Activated CD4-positive, alpha-beta memory T cell treated with anti-CD3 and anti-CD28 coated beads for 36 hours (primary cell): ENCODE measurements at regions of chr1 and their contacts with region 1.

Region 1: GRCh38 chr1:169367486-169368405 is at the starts of genes BLZF1 and NME7:
- DNase-seq: peak; percentile 99
- H3K4me3 Mint-ChIP-seq: peak within 1 kb of the TSS; percentile 43
- H3K27ac Mint-ChIP-seq: no peak within 1 kb of the TSS
- H3K4me1 Mint-ChIP-seq: peaks cover 30% of the 10 kb centered on the region
- H3K27me3 Mint-ChIP-seq: no peaks in the 10 kb centered on the region
- total RNA-seq, gene BLZF1: 10.1 to 10.2 TPM
- total RNA-seq, gene NME7: 12.9 to 15.9 TPM

Region 2: GRCh38 chr1:167819849-167820683 is 1547.7 kb before region 1 on chr1:
- CTCF ChIA-PET with region 1: no interaction called
- POLR2A ChIA-PET with region 1: no interaction called
- intact Hi-C with region 1: no loop called
- DNase-seq: peak; percentile 40
- H3K4me3 Mint-ChIP-seq: peak overlapping the region; percentile 72
- H3K27ac Mint-ChIP-seq: no peak overlapping the region
- H3K4me1 Mint-ChIP-seq: peaks cover 5% of the 10 kb centered on the region
- H3K27me3 Mint-ChIP-seq: peaks cover 11% of the 10 kb centered on the region

Region 3: GRCh38 chr1:168421399-168422004 is 946.2 kb before region 1 on chr1:
- CTCF ChIA-PET with region 1: no interaction called
- POLR2A ChIA-PET with region 1: no interaction called
- intact Hi-C with region 1: loop called (anchors 5 kb)
- DNase-seq: peak; percentile 29
- H3K4me3 Mint-ChIP-seq: peak overlapping the region; percentile 49
- H3K27ac Mint-ChIP-seq: peak overlapping the region; percentile 78
- H3K4me1 Mint-ChIP-seq: peaks cover 33% of the 10 kb centered on the region
- H3K27me3 Mint-ChIP-seq: no peaks in the 10 kb centered on the region

Region 4: DNA sequence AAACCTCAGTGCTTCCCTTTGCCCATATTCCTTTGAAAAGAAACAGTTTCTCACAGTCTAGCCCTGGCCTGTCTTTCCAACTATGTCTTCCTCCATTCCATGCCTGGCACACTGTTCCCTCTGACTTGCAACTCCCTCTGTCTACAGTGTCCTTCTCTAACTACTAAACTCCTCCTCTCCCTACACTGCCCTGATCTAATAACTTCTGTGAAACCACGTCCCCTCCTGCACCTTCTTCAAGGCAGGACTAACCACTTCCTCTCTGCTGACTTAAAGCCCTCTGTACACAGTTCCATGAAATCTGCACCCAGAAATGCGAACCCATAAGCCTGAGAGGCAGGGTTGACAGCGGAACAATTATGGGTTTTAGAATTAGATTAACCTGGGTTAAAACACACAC is 323.4 kb before region 1 on chr1:
- CTCF ChIA-PET with region 1: no interaction called
- POLR2A ChIA-PET with region 1: no interaction called
- intact Hi-C with region 1: loop called (anchors 5 kb)
- DNase-seq: peak; percentile 57
- H3K4me3 Mint-ChIP-seq: no peak overlapping the region
- H3K27ac Mint-ChIP-seq: peak overlapping the region; percentile 35
- H3K4me1 Mint-ChIP-seq: peaks cover 53% of the 10 kb centered on the region
- H3K27me3 Mint-ChIP-seq: no peaks in the 10 kb centered on the region

Region 5: DNA sequence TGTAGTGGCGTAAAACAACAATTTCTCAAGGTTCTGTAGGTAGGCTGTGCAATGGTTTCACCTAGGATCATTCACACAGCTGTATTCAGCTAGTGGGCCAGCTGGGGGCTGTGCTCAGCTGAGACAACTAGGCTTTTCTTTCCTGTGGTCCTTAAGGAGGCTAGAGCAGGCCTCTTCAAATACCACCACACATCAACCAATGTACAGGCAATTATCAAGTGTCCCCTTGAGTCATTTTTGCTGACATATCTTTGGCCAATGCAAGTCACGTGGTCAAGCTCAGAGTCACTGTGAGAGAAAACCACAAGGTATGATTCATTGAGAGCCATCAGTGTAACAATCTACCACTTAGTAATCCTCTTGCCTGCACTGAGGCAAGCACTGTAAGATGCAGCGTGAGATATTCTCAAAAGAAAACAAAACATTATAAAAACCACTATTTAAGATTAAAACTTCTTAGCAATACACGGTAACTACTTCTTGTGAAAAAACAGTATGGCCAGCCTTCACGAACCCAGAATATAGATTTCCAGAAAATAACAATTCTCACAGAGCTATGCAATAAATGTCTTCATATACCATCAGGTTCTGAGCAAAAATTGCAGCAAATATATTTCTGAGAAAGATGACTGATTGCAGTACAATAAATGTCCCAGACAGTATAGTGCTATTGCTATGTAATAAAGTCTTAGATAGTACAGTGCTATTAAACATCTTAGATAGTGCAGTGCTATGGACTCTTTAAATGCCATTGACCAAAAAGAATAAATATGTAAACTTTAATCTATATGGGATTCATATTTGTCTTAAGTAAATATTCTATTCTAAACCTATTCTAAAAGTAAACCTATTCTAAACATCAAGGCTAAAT is 55.4 kb before region 1 on chr1:
- CTCF ChIA-PET with region 1: no interaction called
- POLR2A ChIA-PET with region 1: no interaction called
- intact Hi-C with region 1: loop called (anchors 1 kb)
- DNase-seq: peak; percentile 58
- H3K4me3 Mint-ChIP-seq: no peak overlapping the region
- H3K27ac Mint-ChIP-seq: no peak overlapping the region
- H3K4me1 Mint-ChIP-seq: peaks cover 16% of the 10 kb centered on the region
- H3K27me3 Mint-ChIP-seq: no peaks in the 10 kb centered on the region

Region 6: DNA sequence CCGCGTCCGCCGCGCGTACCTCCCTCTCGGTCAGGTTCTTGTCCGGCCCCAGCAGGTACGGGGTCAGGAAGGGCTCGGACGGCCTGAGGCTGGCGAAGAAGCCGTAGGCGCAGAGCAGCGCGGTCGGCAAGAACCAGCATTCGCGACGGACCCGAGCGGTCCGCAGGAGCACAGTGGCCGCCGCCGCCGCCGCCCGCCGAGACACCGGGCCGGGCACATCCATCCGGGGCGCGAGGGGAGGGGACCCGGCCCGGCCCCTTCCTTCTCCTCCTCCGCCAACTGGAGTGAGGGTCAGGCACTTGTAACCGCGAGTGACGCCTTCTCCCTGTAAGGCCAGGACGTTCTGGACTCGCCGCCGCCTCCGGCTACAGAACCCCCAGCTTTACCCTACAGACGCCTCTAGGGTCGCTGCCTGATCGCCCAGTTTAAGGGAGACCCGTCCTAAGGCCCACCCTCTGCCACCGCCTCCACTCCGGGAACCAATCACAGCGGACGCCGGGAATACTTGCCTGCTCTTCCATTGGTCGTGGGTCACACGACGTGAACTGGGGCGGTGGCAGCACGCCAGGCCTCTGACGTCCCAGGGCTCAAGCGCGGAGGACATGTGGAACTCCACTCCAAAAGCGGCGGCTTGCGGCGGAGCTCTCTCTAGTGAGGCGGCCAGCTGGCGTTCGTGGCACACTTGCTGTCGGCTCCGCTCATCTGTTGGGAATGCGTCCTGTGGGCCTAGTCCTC is 118.0 kb after region 1 on chr1 and contains the start of gene SLC19A2:
- CTCF ChIA-PET with region 1: no interaction called
- POLR2A ChIA-PET with region 1: interaction called, 5 read pairs
- intact Hi-C with region 1: loop called (anchors 1 kb)
- DNase-seq: peak; percentile 96
- H3K4me3 Mint-ChIP-seq: peak within 1 kb of the TSS; percentile 79
- H3K27ac Mint-ChIP-seq: peak within 1 kb of the TSS; percentile 83
- H3K4me1 Mint-ChIP-seq: peaks cover 53% of the 10 kb centered on the region
- H3K27me3 Mint-ChIP-seq: no peaks in the 10 kb centered on the region
- total RNA-seq, gene SLC19A2: 8.6 to 9.4 TPM

Region 7: GRCh38 chr1:169572187-169572586 is 204.4 kb after region 1 on chr1:
- CTCF ChIA-PET with region 1: no interaction called
- POLR2A ChIA-PET with region 1: no interaction called
- intact Hi-C with region 1: no loop called
- DNase-seq: no peak
- H3K4me3 Mint-ChIP-seq: no peak overlapping the region
- H3K27ac Mint-ChIP-seq: no peak overlapping the region
- H3K4me1 Mint-ChIP-seq: peaks cover 12% of the 10 kb centered on the region
- H3K27me3 Mint-ChIP-seq: no peaks in the 10 kb centered on the region

Region 8: DNA sequence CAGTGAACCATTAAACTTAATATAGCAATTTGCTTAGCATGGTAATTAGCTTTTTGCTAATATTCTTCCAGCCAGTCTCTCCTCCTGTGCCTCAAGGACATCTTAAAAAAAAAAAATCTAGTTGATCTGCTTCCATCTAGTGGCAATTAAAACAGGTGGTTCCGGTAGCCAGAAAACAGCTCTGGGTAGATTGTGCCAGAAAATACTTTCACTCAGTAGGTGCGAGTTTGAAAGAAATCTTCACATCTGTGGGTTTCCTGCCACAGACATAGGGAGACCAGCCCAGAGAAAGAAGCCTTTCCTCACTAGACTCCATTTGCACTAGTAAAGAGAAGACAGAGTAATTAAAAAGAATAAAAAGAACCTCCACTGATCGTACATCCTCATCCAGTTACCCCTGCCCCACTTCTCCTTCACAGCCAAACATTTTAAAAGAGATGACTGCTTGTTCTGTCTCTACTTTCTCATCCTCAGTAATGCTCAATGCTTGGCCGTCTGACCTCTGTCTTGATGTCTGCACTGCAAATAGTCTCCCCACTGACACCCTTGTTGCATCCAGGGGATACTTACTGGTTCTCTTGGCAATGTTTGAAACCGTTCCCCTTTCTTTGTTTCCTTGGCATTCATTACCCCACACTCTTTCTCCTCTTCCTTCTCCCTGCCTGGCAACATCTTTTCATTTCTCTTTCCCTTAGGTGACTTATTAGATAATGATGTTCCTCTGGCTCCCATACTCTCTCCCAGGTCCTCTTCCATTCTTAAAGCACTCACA is 326.7 kb after region 1 on chr1:
- CTCF ChIA-PET with region 1: no interaction called
- POLR2A ChIA-PET with region 1: interaction called, 3 read pairs
- intact Hi-C with region 1: loop called (anchors 5 kb)
- DNase-seq: peak; percentile 46
- H3K4me3 Mint-ChIP-seq: peak overlapping the region; percentile 9
- H3K27ac Mint-ChIP-seq: peak overlapping the region; percentile 88
- H3K4me1 Mint-ChIP-seq: peaks cover 96% of the 10 kb centered on the region
- H3K27me3 Mint-ChIP-seq: no peaks in the 10 kb centered on the region

Region 9: GRCh38 chr1:169893494-169894362 is 526.0 kb after region 1 on chr1 and contains the start of gene SCYL3:
- CTCF ChIA-PET with region 1: no interaction called
- POLR2A ChIA-PET with region 1: interaction called, 3 read pairs
- intact Hi-C with region 1: loop called (anchors 5 kb)
- DNase-seq: peak; percentile 92
- H3K4me3 Mint-ChIP-seq: peak within 1 kb of the TSS; percentile 82
- H3K27ac Mint-ChIP-seq: peak within 1 kb of the TSS; percentile 98
- H3K4me1 Mint-ChIP-seq: peaks cover 38% of the 10 kb centered on the region
- H3K27me3 Mint-ChIP-seq: no peaks in the 10 kb centered on the region
- total RNA-seq, gene SCYL3: 11.1 to 12.4 TPM